Left cardiac atrium (tissue), 4 donors: ENCODE measurements at regions of chr15 and their contacts with region 1.

Region 1: GRCh38 chr15:58227706-58228543 is 89.7 kb downstream of the AQP9 start:
- DNase-seq: peak; percentile 80
- ATAC-seq: peak; percentile 32 to 69

Region 2: GRCh38 chr15:58260911-58261267 is 33.0 kb after region 1 on chr15:
- intact Hi-C with region 1: no loop called
- DNase-seq: peak; percentile 68
- ATAC-seq: peak; percentile 82 to 88

Region 3: GRCh38 chr15:58423831-58424608 is 196.1 kb after region 1 on chr15:
- intact Hi-C with region 1: no loop called
- DNase-seq: no peak
- ATAC-seq: no peak

Region 4: DNA sequence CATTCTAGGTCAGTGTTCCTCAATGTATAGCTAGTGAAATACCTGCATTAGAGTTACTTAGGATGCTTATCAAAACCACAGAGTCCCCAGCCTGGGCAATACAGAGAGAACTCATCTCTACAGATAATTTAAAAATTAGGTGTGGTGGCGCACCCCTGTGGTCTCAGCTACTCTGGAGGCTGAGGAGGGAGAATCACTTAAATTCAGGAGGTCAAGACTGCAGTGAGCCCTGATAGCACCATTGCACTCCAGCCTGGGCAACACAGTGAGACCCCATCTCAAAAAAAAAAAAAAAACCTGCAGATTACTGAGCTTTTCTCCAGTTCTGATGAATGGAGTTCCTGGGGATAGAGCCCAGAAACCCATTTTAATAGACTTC is 533.1 kb after region 1 on chr15:
- intact Hi-C with region 1: loop called in 1 of 2 experiments (anchors 5 kb)
- DNase-seq: no peak
- ATAC-seq: no peak

Region 5: GRCh38 chr15:58933281-58934113 is 705.6 kb after region 1 on chr15 and contains the start of gene SLTM:
- intact Hi-C with region 1: loop called in 1 of 2 experiments (anchors 10 kb)
- DNase-seq: peak; percentile 95
- ATAC-seq: peak; percentile 98 to 99
- total RNA-seq, gene SLTM: 42.1 to 60.6 TPM